PC-9 (cell line): ENCODE measurements at regions of chr19 and their contacts with region 1.

Region 1: DNA sequence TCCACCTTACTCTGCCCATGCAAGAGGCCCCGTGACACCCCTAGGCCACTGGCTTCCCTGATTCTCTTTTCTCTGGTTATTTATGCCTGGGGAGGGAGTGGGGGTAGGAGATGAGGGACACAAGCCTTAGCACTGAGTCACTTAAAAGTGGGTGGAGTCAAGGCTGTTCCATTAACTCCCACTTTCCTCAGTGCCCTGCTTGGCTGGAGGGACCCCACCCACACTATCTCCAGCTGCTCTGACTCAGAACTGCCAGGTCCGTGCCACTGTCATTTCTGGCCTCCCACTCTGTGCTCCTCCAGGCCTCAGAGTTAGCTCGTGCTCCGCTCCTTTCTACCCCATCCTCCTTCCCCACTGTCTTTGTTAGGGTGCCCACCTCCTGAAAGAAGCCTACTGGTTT is 113.4 kb upstream of the UQCRFS1 start:
- DNase-seq: no peak
- H3K4me3 ChIP-seq: no peak overlapping the region
- H3K27ac ChIP-seq: no peak overlapping the region
- H3K4me1 ChIP-seq: no peaks in the 10 kb centered on the region
- H3K27me3 ChIP-seq: peaks cover 50% of the 10 kb centered on the region
- CTCF ChIP-seq: no peak

Region 2: GRCh38 chr19:29761575-29762232 is 435.4 kb after region 1 on chr19:
- CTCF ChIA-PET with region 1: interaction called, 11 read pairs
- POLR2A ChIA-PET with region 1: no interaction called
- intact Hi-C with region 1: no loop called
- DNase-seq: no peak
- H3K4me3 ChIP-seq: no peak overlapping the region
- H3K27ac ChIP-seq: no peak overlapping the region
- H3K4me1 ChIP-seq: no peaks in the 10 kb centered on the region
- H3K27me3 ChIP-seq: peaks cover 21% of the 10 kb centered on the region
- CTCF ChIP-seq: no peak

Region 3: DNA sequence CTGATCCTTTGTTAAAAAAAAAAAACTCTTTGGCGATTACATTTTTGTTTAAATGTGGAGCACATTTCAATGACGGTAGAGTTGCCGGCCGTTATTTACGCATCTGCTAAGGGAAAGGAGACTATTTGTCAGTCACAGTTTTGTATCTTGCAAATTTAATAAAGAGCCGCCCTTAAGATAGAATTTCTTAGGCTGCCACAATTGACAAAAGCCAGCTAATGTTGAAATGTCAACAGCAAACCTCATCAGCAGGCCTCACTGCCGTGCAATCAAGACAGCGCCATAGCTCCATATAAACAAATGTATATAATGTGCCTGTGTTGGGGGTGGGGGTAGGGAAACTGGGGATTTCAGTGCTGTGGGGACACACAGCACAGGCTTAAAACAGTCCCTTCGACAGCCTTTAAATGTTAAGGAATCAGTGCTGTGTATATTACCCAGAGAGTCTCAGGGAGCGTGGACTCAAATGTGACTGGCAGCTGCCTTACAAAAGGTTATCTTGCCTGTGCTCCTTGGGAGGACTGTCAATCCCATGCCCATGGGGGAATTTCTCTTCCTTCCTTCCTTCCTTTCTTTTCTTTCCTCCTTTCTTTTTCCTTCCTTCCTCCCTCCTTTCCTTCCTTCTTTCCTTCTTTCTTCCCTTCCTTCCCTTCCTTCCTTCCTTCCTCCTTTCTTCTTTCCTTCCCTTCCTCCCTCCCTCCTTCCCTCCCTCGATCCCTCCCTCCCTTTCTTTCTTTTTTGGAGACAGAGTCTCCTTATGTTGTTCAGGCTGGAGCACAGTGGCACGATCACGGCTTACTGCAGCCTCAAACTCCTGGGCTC is 723.7 kb after region 1 on chr19:
- CTCF ChIA-PET with region 1: no interaction called
- POLR2A ChIA-PET with region 1: no interaction called
- intact Hi-C with region 1: no loop called
- DNase-seq: no peak
- H3K4me3 ChIP-seq: no peak overlapping the region
- H3K27ac ChIP-seq: no peak overlapping the region
- H3K4me1 ChIP-seq: no peaks in the 10 kb centered on the region
- H3K27me3 ChIP-seq: no peaks in the 10 kb centered on the region
- CTCF ChIP-seq: no peak